Cardiac septum (tissue), 1 donor: ENCODE measurements at regions of chr1 and their contacts with region 1.

Region 1: GRCh38 chr1:236685917-236686814 is at the start of gene ACTN2:
- DNase-seq: peak; percentile 86
- total RNA-seq, gene ACTN2: 3,389 TPM

Region 2: DNA sequence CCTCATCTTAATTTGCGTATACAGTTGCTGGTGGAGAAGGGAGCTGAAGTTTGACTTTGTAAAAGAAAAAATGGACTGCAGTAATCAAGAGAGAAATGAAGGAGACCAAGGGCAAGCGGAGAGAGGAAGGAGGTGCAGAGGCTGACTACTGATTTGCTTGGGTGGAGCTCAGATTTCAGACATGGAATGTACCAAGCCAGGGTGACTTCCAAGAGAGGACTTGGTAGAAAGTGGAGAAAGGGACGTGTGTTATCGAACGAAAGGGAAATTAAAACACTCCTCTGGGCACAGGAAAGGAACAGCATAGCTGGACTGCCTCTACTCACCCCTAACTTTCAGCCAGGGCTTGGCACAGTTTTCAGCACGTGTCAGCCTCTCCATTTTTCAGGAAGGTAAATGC is 66.8 kb before region 1 on chr1:
- intact Hi-C with region 1: no loop called
- DNase-seq: no peak

Region 3: GRCh38 chr1:236748471-236748870 is 62.3 kb after region 1 on chr1:
- intact Hi-C with region 1: loop called (anchors 5 kb)
- DNase-seq: no peak

Region 4: DNA sequence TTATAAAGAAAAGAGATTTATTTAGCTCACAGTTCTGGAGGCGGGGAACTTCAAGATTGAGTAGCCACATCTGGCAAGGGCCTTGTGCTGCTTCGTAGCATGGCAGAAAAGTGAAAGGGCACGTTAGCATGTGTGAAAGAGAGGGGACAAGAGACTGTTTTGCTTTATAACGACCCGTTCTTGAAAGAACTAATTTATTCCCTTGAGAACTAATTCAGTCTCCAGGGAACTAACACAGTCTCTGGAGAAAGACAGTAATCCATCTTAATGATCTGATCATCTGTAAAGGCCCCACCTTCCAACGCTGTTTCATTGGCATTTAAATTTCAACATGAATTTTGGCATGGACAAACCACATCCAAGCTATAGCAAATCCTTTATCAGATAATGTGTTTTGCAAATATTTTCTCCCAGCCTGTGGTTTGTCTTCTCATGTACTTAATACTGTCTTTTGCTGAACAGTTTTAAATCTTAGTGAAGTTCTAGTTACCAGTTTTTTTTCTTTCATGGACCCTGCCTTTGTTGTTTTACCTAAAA is 135.0 kb after region 1 on chr1:
- intact Hi-C with region 1: no loop called
- DNase-seq: no peak